Thyroid gland (tissue), 4 donors: ENCODE measurements at regions of chr5 and their contacts with region 1.

Region 1: DNA sequence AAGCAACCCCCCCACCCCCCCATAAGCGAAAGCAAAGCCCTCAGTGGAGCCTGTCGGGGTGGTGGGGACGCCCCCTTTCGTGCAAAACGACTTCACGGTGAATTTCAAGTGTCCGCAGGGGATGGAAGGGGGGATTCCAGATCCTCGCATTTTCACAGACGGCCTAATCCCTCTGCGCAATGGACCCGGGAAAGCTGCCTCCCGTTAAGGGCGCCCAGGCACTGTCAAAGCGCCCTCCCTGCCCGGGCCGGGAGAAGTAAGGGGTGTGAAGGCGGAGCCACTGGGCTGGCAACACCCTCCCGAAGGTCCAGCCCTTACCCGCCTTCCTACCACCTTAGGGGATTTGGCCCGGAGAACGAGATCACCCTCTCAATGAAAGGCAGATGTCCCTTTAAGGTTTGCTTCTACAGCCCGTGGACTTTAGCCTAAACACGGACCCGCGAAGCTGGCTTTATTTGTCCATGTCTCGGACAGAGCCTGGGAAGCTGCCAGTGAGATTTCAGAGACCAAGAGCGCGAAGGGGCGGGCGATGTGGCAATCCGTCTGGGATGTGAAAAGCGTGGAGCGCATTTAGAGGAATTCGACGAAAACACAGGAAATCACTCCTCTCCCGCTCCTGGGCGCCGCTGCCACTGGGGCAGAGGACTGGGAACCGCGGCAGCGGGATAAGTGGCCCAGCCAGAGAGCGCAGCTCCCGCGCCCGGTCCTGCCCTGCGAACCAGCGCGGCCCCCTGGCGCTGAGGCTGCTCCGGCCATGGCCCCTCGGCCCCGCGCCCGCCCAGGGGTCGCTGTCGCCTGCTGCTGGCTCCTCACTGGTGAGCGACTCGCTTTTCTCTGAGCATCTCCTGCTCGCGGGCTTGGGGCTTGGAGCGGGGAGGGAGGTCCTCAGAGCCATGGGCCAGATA is at the starts of genes ITGA1 and PELO:
- DNase-seq: peak; percentile 77
- H3K4me3 ChIP-seq: peak within 1 kb of the TSS; percentile 42 to 78 (median 66)
- H3K27ac ChIP-seq: peak within 1 kb of the TSS; percentile 82 to 94 (median 91)
- H3K4me1 ChIP-seq: peaks cover 3 to 8% of the 10 kb centered on the region in 2 donors
- H3K27me3 ChIP-seq: no peaks in the 10 kb centered on the region
- CTCF ChIP-seq: peak in 4 of 6 experiments; percentile 22 to 55 (median 47)
- POLR2A ChIP-seq: peak in 1 of 2 donors; percentile 78
- total RNA-seq, gene ITGA1: 38.7 to 85.9 (median 52.6) TPM
- total RNA-seq, gene PELO: 20.0 to 37.0 (median 23.3) TPM

Region 2: GRCh38 chr5:52864371-52864770 is 76.5 kb after region 1 on chr5:
- intact Hi-C with region 1: loop called (anchors 10 kb)
- DNase-seq: no peak
- H3K4me3 ChIP-seq: no peak overlapping the region
- H3K27ac ChIP-seq: peak overlapping the region; percentile 69 to 81 (median 77)
- H3K4me1 ChIP-seq: peaks cover 15 to 16% of the 10 kb centered on the region in 2 donors
- H3K27me3 ChIP-seq: no peaks in the 10 kb centered on the region
- CTCF ChIP-seq: no peak
- POLR2A ChIP-seq: no peak

Region 3: DNA sequence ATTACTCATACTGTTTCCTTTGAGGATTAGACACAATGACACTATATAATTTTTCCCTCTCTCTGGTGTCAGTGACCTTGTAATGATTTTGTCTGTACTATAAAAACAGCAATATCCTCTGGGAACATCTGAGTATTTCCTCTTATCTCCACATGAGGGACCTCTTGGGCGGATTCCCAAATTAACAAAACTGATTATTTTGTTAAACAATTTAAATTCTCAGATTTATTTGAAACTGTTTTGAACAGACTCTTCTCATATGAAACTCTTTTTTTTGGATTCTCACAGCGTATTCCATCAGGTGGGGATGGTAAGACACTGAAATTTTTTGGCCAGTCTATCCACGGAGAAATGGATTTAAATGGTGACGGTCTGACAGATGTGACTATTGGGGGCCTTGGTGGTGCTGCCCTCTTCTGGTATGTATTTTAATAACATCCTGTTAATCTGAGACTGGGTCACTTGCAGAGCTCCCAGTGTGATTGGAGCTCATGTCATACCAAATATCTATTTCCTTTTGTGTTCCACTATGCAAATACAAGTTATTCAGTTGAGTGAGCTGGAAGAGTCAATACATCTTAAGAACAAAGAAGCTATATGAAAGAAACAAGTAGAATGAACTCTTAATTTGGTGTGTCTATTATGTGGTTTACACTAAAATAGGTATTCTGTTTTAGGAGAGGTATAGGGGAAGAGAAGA is 127.5 kb after region 1 on chr5:
- intact Hi-C with region 1: loop called (anchors 2 kb)
- DNase-seq: peak; percentile 41 to 44
- H3K4me3 ChIP-seq: no peak overlapping the region
- H3K27ac ChIP-seq: peak overlapping the region in 1 of 3 donors; percentile 18
- H3K4me1 ChIP-seq: no peaks in the 10 kb centered on the region
- H3K27me3 ChIP-seq: no peaks in the 10 kb centered on the region
- CTCF ChIP-seq: peak; percentile 52 to 91 (median 76)
- POLR2A ChIP-seq: no peak